ENCODE measurements at regions of chr12 and their contacts with region 1.

Region 1: DNA sequence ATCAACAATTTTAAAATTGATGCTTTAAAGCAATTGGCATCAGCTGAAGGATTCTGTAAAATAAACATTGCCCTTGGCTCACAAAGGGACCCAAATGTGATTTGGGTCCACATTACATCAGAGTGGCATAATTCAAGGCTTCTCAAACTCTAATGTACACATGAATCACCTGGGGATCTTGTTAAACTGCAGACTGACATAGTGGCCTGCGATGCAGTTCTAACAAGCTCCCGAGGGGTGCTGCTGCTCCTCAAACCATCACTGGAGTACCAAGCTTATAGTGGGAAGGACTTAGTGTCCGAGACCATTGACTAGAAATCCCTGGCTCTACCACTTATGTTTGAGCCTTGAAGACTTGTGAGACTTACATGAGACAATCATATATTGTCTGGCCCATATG is 31.8 kb upstream of the DNM1L start:
- DNase-seq: peak in 1 of 2 experiments; percentile 33
- H3K4me3 ChIP-seq: no peak overlapping the region
- H3K27ac ChIP-seq: no peak overlapping the region
- H3K4me1 ChIP-seq: no peaks in the 10 kb centered on the region
- H3K27me3 ChIP-seq: no peaks in the 10 kb centered on the region
- CTCF ChIP-seq: peak in 1 of 3 experiments; percentile 3; a peak in 1 of 4 replicates
- EP300 ChIP-seq: no peak
- POLR2A ChIP-seq: no peak
- RAD21 ChIP-seq: peak in 1 of 2 experiments; percentile 8; a peak in 1 of 4 replicates

Region 2: GRCh38 chr12:32379213-32379612 is 268.1 kb before region 1 on chr12:
- CTCF ChIA-PET with region 1: no interaction called
- POLR2A ChIA-PET with region 1: no interaction called
- DNase-seq: no peak
- H3K4me3 ChIP-seq: no peak overlapping the region
- H3K27ac ChIP-seq: no peak overlapping the region
- H3K4me1 ChIP-seq: peaks cover 0 to 8% (median 5%) of the 10 kb centered on the region in 4 experiments; a peak in 4 of 7 replicates
- H3K27me3 ChIP-seq: no peaks in the 10 kb centered on the region
- CTCF ChIP-seq: no peak
- EP300 ChIP-seq: no peak
- POLR2A ChIP-seq: no peak
- RAD21 ChIP-seq: no peak

Region 3: GRCh38 chr12:32627976-32628375 is 19.3 kb before region 1 on chr12:
- CTCF ChIA-PET with region 1: no interaction called
- POLR2A ChIA-PET with region 1: no interaction called
- DNase-seq: no peak
- H3K4me3 ChIP-seq: no peak overlapping the region
- H3K27ac ChIP-seq: no peak overlapping the region
- H3K4me1 ChIP-seq: no peaks in the 10 kb centered on the region
- H3K27me3 ChIP-seq: no peaks in the 10 kb centered on the region
- CTCF ChIP-seq: no peak
- EP300 ChIP-seq: no peak
- POLR2A ChIP-seq: no peak
- RAD21 ChIP-seq: no peak

Region 4: DNA sequence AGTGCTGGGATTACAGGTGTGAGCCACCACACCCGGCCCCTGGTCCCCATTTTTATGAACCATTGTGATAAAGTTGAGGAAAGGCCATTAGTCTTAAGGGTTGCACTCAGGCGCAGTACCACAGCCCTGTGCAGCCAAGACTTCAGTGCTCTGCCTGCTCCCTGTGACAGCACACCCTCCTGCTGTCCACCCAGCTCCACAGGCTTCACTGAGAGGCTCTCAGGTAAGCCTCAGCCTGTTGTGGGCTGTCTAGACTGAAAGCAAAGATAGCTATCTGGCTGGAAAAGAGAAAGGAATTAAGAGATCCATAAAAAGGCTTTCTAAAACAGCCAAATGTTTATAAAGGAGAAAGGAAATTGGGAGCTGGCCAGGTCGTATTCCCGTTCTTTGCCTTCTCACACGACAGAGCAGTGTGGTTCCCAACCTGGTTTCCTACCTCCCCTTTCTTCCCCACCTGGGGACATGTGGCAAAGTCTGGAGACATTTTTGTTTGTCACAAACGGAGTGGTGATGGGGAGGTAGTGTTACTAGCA is 12.7 kb after region 1 on chr12:
- CTCF ChIA-PET with region 1: interaction called, 21 read pairs
- POLR2A ChIA-PET with region 1: interaction called, 3 read pairs
- DNase-seq: peak in 1 of 2 experiments; percentile 43
- H3K4me3 ChIP-seq: no peak overlapping the region
- H3K27ac ChIP-seq: no peak overlapping the region
- H3K4me1 ChIP-seq: 0 out of 7 replicates have a peak, but pooled peaks cover 0 to 1% (median 0%) of the 10 kb centered on the region in 4 experiments
- H3K27me3 ChIP-seq: 0 out of 7 replicates have a peak, but pooled peaks cover 0 to 1% (median 0%) of the 10 kb centered on the region in 4 experiments
- CTCF ChIP-seq: no peak
- EP300 ChIP-seq: no peak
- POLR2A ChIP-seq: no peak
- RAD21 ChIP-seq: no peak